ENCODE measurements at regions of chr15 and their contacts with region 1.

Region 1: DNA sequence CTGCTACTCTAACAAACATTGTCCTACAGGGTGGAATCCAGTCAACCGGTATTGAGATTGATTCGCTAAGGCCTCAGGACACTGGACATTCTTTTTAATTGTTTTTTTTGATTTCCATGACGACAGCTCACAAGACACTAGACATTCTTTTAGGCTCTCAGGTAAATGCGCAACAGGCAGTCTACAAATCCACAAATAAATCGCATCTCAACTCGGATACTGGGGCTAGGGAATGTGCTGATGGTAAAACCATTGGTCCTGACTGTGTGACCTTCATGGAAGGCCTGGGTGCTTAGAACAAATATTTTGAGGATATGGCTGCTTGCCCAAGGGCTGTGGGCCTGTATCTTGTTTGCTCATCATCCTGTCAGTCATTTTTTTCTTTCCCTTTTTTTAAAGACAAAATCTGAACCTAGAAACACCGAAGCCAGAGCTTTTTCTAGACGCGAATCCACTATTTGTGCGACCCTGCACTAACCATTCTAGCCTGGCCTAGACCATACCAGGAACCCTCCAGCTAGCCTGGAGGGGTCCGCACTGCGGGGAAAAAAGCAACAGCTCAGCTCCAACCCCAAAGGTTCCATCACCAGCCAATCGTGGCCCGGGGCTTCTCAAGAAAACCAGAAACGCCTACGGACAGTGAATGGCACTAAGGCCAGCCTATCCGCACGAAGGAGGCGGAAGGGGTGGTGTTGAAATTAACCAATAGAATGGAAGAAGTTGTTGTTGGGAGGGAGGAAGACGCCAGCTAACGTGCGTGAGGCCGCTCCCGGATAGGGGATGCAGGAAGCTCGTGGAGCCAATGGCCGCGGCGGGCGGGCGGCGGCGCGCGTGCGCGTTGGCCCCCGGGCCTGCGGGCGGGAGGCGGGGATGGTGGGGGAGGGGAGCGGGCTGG is 18.1 kb upstream of the CHD2 start:
- DNase-seq: peak; percentile 97 to 99 (median 98)
- ATAC-seq: peak; percentile 83
- H3K4me3 ChIP-seq: peak overlapping the region; percentile 50
- H3K4me3 Mint-ChIP-seq: peak overlapping the region; percentile 93
- H3K27ac ChIP-seq: peak overlapping the region; percentile 85 to 99
- H3K27ac Mint-ChIP-seq: peak overlapping the region; percentile 97
- H3K4me1 ChIP-seq: peaks cover 41% of the 10 kb centered on the region
- H3K4me1 Mint-ChIP-seq: peaks cover 66% of the 10 kb centered on the region
- H3K27me3 ChIP-seq: no peaks in the 10 kb centered on the region
- H3K27me3 Mint-ChIP-seq: peaks cover 5% of the 10 kb centered on the region
- CTCF ChIP-seq: no peak

Region 2: GRCh38 chr15:92797168-92797951 is 84.7 kb before region 1 on chr15:
- CTCF ChIA-PET with region 1: interaction called, 7 read pairs
- POLR2A ChIA-PET with region 1: interaction called, 36 read pairs
- intact Hi-C with region 1: no loop called
- DNase-seq: peak in 5 of 14 experiments; percentile 26 to 89 (median 83)
- ATAC-seq: peak; percentile 95
- H3K4me3 ChIP-seq: no peak overlapping the region
- H3K4me3 Mint-ChIP-seq: no peak overlapping the region
- H3K27ac ChIP-seq: no peak overlapping the region
- H3K27ac Mint-ChIP-seq: peak overlapping the region; percentile 31
- H3K4me1 ChIP-seq: peaks cover 10% of the 10 kb centered on the region
- H3K4me1 Mint-ChIP-seq: peaks cover 10% of the 10 kb centered on the region
- H3K27me3 ChIP-seq: no peaks in the 10 kb centered on the region
- H3K27me3 Mint-ChIP-seq: no peaks in the 10 kb centered on the region
- CTCF ChIP-seq: peak; percentile 73

Region 3: GRCh38 chr15:92820236-92821021 is 61.6 kb before region 1 on chr15:
- CTCF ChIA-PET with region 1: no interaction called
- POLR2A ChIA-PET with region 1: interaction called, 224 read pairs
- intact Hi-C with region 1: loop called in 1 of 2 experiments (anchors 2 kb)
- DNase-seq: peak; percentile 69 to 94 (median 82)
- ATAC-seq: peak; percentile 81
- H3K4me3 ChIP-seq: peak overlapping the region; percentile 63
- H3K4me3 Mint-ChIP-seq: peak overlapping the region; percentile 88
- H3K27ac ChIP-seq: peak overlapping the region; percentile 82 to 91
- H3K27ac Mint-ChIP-seq: peak overlapping the region; percentile 79
- H3K4me1 ChIP-seq: peaks cover 52% of the 10 kb centered on the region
- H3K4me1 Mint-ChIP-seq: peaks cover 55% of the 10 kb centered on the region
- H3K27me3 ChIP-seq: no peaks in the 10 kb centered on the region
- H3K27me3 Mint-ChIP-seq: no peaks in the 10 kb centered on the region
- CTCF ChIP-seq: no peak

Region 4: GRCh38 chr15:92845126-92845508 is 36.9 kb before region 1 on chr15:
- CTCF ChIA-PET with region 1: interaction called, 4 read pairs
- POLR2A ChIA-PET with region 1: interaction called, 305 read pairs
- intact Hi-C with region 1: loop called (anchors 2 kb)
- DNase-seq: peak in 3 of 14 experiments; percentile 76 to 84 (median 81)
- ATAC-seq: peak; percentile 46
- H3K4me3 ChIP-seq: peak overlapping the region; percentile 31
- H3K4me3 Mint-ChIP-seq: peak overlapping the region; percentile 88
- H3K27ac ChIP-seq: peak overlapping the region; percentile 37 to 75
- H3K27ac Mint-ChIP-seq: peak overlapping the region; percentile 91
- H3K4me1 ChIP-seq: peaks cover 79% of the 10 kb centered on the region
- H3K4me1 Mint-ChIP-seq: peaks cover 63% of the 10 kb centered on the region
- H3K27me3 ChIP-seq: no peaks in the 10 kb centered on the region
- H3K27me3 Mint-ChIP-seq: no peaks in the 10 kb centered on the region
- CTCF ChIP-seq: no peak

Region 5: GRCh38 chr15:92864127-92864814 is 17.8 kb before region 1 on chr15:
- CTCF ChIA-PET with region 1: interaction called, 3 read pairs
- POLR2A ChIA-PET with region 1: interaction called, 13 read pairs
- intact Hi-C with region 1: loop called in 1 of 2 experiments (anchors 2 kb)
- DNase-seq: no peak
- ATAC-seq: no peak
- H3K4me3 ChIP-seq: no peak overlapping the region
- H3K4me3 Mint-ChIP-seq: no peak overlapping the region
- H3K27ac ChIP-seq: no peak overlapping the region
- H3K27ac Mint-ChIP-seq: no peak overlapping the region
- H3K4me1 ChIP-seq: no peaks in the 10 kb centered on the region
- H3K4me1 Mint-ChIP-seq: no peaks in the 10 kb centered on the region
- H3K27me3 ChIP-seq: no peaks in the 10 kb centered on the region
- H3K27me3 Mint-ChIP-seq: no peaks in the 10 kb centered on the region
- CTCF ChIP-seq: no peak

Region 6: DNA sequence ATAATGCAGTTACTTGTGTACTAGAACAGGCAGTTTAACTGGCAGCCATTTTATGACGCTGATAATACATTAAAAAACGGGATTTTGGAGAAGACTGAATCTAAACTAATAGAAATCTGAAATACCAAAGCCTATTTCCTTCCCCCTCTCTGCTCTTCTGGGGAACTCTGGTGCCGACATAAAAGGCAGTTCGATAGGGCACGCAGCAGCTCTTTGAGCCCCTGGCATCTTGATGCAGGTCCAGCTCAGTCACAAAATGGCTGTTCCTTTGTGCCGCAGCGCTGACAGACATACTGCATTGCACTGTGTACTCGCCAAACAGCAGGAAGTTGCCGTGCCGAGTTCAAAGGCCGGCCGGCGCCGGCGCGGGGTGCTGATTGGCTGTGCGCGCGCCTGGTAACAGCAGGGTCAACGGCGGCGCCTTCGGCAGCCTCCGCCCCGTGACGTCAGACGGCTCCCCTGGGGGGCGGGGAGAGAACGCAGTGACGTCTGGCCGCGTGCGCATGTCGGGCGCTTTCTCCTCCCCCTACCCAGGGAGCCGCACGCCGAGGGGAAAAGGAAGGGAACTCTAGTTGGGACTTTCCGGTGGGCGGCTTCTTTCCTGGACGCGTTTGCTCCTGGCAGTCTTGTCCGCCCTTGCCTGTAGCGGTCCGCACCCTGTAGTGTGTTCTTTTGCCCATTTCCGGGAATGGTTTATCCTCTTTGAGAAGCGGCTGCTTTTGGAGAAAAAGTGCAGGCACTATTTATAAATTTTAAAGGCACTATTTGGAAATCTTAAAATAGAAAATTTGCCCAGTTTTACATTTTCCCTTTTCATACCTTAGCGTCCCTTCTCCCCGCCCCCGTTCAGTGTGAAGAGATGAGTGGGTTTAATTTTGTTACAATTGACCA is 22.1 kb after region 1 on chr15:
- CTCF ChIA-PET with region 1: interaction called, 11 read pairs
- POLR2A ChIA-PET with region 1: interaction called, 1,007 read pairs
- intact Hi-C with region 1: loop called (anchors 1 to 2 kb)
- DNase-seq: peak; percentile 97 to 100 (median 98)
- ATAC-seq: peak; percentile 78
- H3K4me3 ChIP-seq: peak overlapping the region; percentile 74
- H3K4me3 Mint-ChIP-seq: peak overlapping the region; percentile 96
- H3K27ac ChIP-seq: peak overlapping the region; percentile 97
- H3K27ac Mint-ChIP-seq: peak overlapping the region; percentile 99
- H3K4me1 ChIP-seq: peaks cover 31% of the 10 kb centered on the region
- H3K4me1 Mint-ChIP-seq: peaks cover 73% of the 10 kb centered on the region
- H3K27me3 ChIP-seq: no peaks in the 10 kb centered on the region
- H3K27me3 Mint-ChIP-seq: no peaks in the 10 kb centered on the region
- CTCF ChIP-seq: no peak

Region 7: GRCh38 chr15:92928225-92928750 is 46.2 kb after region 1 on chr15:
- CTCF ChIA-PET with region 1: no interaction called
- POLR2A ChIA-PET with region 1: interaction called, 10 read pairs
- intact Hi-C with region 1: no loop called
- DNase-seq: no peak
- ATAC-seq: no peak
- H3K4me3 ChIP-seq: no peak overlapping the region
- H3K4me3 Mint-ChIP-seq: no peak overlapping the region
- H3K27ac ChIP-seq: no peak overlapping the region
- H3K27ac Mint-ChIP-seq: peak overlapping the region; percentile 57
- H3K4me1 ChIP-seq: peaks cover 21% of the 10 kb centered on the region
- H3K4me1 Mint-ChIP-seq: peaks cover 79% of the 10 kb centered on the region
- H3K27me3 ChIP-seq: no peaks in the 10 kb centered on the region
- H3K27me3 Mint-ChIP-seq: no peaks in the 10 kb centered on the region
- CTCF ChIP-seq: no peak